ENCODE measurements at regions of chr3 and their contacts with region 1.

Region 1: GRCh38 chr3:133236901-133237300 is 163.0 kb upstream of the BFSP2 start:
- DNase-seq: no peak
- H3K4me3 ChIP-seq: no peak overlapping the region
- H3K27ac ChIP-seq: no peak overlapping the region
- H3K27me3 ChIP-seq: no peaks in the 10 kb centered on the region
- CTCF ChIP-seq: no peak

Region 2: GRCh38 chr3:133362539-133362938 is 125.6 kb after region 1 on chr3:
- CTCF ChIA-PET with region 1: interaction called, 15 read pairs
- POLR2A ChIA-PET with region 1: no interaction called
- DNase-seq: no peak
- H3K4me3 ChIP-seq: no peak overlapping the region
- H3K27ac ChIP-seq: no peak overlapping the region
- H3K27me3 ChIP-seq: no peaks in the 10 kb centered on the region
- CTCF ChIP-seq: no peak

Region 3: DNA sequence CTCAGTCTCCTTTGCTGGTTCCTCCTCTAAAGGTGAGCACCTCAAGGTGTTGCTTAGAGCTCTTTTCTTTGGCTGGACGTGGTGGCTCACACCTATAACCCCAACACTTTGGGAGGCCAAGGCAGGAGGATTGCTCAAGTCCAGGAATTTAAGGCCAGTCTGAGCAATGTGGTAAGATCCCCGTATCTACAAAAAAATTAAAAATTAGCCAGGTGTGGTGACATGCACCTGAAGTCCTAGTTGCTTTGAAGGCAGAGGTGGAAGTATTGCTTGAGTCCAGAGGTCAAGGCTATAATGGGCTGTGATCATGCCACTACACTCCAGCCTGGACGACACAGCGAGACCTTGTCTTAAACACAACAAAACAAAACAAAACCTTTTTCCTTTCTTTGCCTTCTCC is 396.5 kb after region 1 on chr3:
- CTCF ChIA-PET with region 1: no interaction called
- POLR2A ChIA-PET with region 1: no interaction called
- DNase-seq: no peak
- H3K4me3 ChIP-seq: no peak overlapping the region
- H3K27ac ChIP-seq: no peak overlapping the region
- H3K27me3 ChIP-seq: no peaks in the 10 kb centered on the region
- CTCF ChIP-seq: no peak